GM12878 (cell line): ENCODE measurements at regions of chr4 and their contacts with region 1.

Region 1: GRCh38 chr4:75724066-75724866 is at the start of gene USO1:
- DNase-seq: peak; percentile 97
- ATAC-seq: peak; percentile 89
- H3K4me3 ChIP-seq: peak within 1 kb of the TSS; percentile 93
- H3K27ac ChIP-seq: peak within 1 kb of the TSS; percentile 90
- H3K4me1 ChIP-seq: peaks cover 9% of the 10 kb centered on the region
- H3K27me3 ChIP-seq: no peaks in the 10 kb centered on the region
- CTCF ChIP-seq: peak; percentile 69 to 88 (median 69)
- EP300 ChIP-seq: no peak
- POLR2A ChIP-seq: peak; percentile 93
- RAD21 ChIP-seq: peak; percentile 64
- polyA plus RNA-seq, gene USO1: 19.4 to 25.3 TPM

Region 2: DNA sequence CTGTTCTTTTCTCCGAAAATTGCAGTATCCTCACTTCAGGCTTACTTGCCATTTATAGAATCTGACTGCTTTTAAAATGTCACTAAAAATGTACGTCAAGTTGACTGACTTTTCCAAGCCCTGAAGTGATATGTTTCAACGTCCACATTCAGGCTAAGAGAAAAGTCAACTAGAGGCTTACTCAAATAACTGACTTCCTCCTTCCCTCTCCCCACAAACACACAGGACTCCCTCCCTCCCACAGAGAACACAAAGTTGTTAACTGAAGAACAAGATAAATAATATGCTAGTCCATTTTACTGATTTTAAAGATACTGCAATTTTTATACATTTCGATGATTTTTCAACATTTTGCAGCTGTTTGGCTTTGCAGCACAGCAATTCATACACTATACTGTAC is 80.2 kb before region 1 on chr4:
- CTCF ChIA-PET with region 1: interaction called, 11 read pairs
- POLR2A ChIA-PET with region 1: interaction called, 5 read pairs
- RAD21 ChIA-PET with region 1: interaction called, 4 read pairs
- SMC1A ChIA-PET with region 1: interaction called, 4 read pairs
- in situ Hi-C with region 1: no loop called
- intact Hi-C with region 1: no loop called
- DNase-seq: no peak
- ATAC-seq: no peak
- H3K4me3 ChIP-seq: no peak overlapping the region
- H3K27ac ChIP-seq: no peak overlapping the region
- H3K4me1 ChIP-seq: no peaks in the 10 kb centered on the region
- H3K27me3 ChIP-seq: no peaks in the 10 kb centered on the region
- CTCF ChIP-seq: no peak
- EP300 ChIP-seq: no peak
- POLR2A ChIP-seq: no peak
- RAD21 ChIP-seq: no peak

Region 3: GRCh38 chr4:75666299-75666698 is 58.0 kb before region 1 on chr4:
- CTCF ChIA-PET with region 1: interaction called, 40 read pairs
- POLR2A ChIA-PET with region 1: interaction called, 72 read pairs
- RAD21 ChIA-PET with region 1: interaction called, 5 read pairs
- SMC1A ChIA-PET with region 1: interaction called, 98 read pairs
- in situ Hi-C with region 1: no loop called
- intact Hi-C with region 1: no loop called
- DNase-seq: no peak
- ATAC-seq: no peak
- H3K4me3 ChIP-seq: peak overlapping the region; percentile 15; the same call in 1 of the 2 replicates
- H3K27ac ChIP-seq: no peak overlapping the region
- H3K4me1 ChIP-seq: no peaks in the 10 kb centered on the region; the same call in 1 of the 2 replicates
- H3K27me3 ChIP-seq: no peaks in the 10 kb centered on the region
- CTCF ChIP-seq: no peak
- EP300 ChIP-seq: no peak
- POLR2A ChIP-seq: no peak
- RAD21 ChIP-seq: no peak

Region 4: DNA sequence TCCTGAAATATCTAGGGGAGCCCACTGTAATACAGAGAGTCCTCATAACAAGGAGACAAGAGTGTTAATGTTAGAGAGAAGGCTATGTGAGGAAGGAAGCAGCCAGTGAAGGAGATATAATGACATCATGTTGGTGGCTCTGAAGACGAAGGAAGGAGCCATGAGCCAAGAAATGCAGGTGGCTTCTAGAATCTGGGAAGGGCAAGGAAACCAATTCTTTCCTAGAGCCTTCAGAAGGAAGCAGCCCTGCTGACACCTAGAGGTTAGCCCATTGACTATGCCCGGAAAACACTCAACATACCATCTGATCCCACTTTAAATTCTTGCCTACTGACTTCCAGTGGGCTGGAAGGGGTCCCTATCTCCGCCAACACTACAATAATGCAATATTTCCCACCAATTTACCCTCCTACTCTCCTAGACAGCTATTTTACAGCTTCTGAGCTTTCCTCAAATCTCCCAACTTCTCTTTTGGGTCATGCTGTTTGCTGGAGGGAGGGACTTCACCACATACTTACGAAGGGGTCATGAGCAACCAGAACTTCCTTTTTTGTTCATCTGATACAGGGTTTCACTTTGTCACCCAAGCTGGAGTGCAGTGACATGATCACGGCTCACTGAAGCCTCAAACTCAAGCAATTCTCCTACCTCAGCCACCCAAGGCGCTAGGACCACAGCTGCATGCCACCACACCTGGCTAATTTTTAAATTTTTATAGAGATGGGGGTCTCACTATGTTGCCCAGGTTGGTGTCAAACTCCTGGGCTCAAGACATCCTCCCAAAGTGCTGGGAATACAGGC is 25.9 kb before region 1 on chr4:
- CTCF ChIA-PET with region 1: interaction called, 4 read pairs
- POLR2A ChIA-PET with region 1: interaction called, 9 read pairs
- RAD21 ChIA-PET with region 1: interaction called, 4 read pairs
- SMC1A ChIA-PET with region 1: interaction called, 8 read pairs
- in situ Hi-C with region 1: no loop called
- intact Hi-C with region 1: loop called (anchors 1 kb)
- DNase-seq: peak; percentile 66
- ATAC-seq: peak; percentile 97
- H3K4me3 ChIP-seq: peak overlapping the region; percentile 54; the same call in 1 of the 2 replicates
- H3K27ac ChIP-seq: peak overlapping the region; percentile 90
- H3K4me1 ChIP-seq: peaks cover 21% of the 10 kb centered on the region
- H3K27me3 ChIP-seq: no peaks in the 10 kb centered on the region
- CTCF ChIP-seq: no peak
- EP300 ChIP-seq: no peak
- POLR2A ChIP-seq: no peak
- RAD21 ChIP-seq: no peak

Region 5: DNA sequence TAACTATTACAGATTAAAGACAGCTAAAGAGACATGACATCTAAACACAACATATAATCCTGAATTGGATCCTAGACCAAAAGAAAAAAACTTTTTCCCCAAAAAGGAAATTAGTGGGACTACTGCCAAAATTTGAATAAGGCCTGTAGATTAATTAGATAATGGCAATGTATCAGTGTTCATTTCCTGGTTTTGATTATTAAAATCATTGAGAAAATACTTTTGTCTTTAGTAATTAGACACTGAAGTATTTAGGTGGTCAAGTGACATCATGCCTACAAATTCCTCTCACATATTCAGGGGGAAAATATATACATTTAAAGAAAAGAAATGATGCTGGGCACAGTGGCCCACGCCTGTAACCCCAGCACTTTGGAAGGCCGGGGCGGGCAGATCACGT is 10.3 kb before region 1 on chr4:
- CTCF ChIA-PET with region 1: interaction called, 22 read pairs
- POLR2A ChIA-PET with region 1: interaction called, 8 read pairs
- RAD21 ChIA-PET with region 1: interaction called, 7 read pairs
- SMC1A ChIA-PET with region 1: interaction called, 13 read pairs
- in situ Hi-C with region 1: no loop called
- intact Hi-C with region 1: no loop called
- DNase-seq: no peak
- ATAC-seq: no peak
- H3K4me3 ChIP-seq: no peak overlapping the region
- H3K27ac ChIP-seq: no peak overlapping the region
- H3K4me1 ChIP-seq: no peaks in the 10 kb centered on the region; the same call in 1 of the 2 replicates
- H3K27me3 ChIP-seq: no peaks in the 10 kb centered on the region
- CTCF ChIP-seq: no peak
- EP300 ChIP-seq: no peak
- POLR2A ChIP-seq: no peak
- RAD21 ChIP-seq: no peak